ENCODE measurements at regions of chr6 and their contacts with region 1.

Region 1: DNA sequence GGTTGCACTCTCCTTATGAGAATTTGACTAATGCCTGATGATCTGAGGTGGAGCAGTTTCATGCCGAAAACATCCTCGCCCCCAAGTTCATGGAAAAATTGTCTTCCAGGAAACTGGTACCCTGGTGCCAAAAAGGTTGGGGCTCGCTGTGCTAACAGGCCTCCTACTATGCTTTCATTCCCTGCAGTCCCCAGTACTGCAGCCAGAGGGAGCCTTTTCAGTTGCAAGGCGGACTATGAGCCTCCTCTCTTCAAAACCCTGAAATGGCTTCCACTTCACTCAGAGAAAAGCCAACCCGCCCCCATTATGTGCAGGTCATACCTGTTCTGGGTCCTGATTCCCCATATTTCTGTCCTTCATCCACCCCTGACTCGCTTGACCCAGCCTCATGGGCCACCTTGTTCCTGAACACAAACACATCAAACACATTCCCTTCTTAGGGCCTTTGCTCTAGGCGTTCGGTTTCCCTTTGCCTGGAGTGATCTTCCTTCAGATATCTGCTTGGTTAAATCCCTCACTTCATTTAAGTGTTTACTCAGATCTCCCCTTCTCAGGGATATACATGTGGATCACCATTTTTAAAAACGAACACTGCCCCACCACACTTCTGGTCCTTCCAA is 173.7 kb downstream of the PHACTR1 start:
- DNase-seq: no peak
- H3K4me3 ChIP-seq: no peak overlapping the region
- H3K27ac ChIP-seq: no peak overlapping the region
- H3K27me3 ChIP-seq: peaks cover 0 to 12% (median 0%) of the 10 kb centered on the region in 45 donors
- CTCF ChIP-seq: peak in 33 of 56 donors; percentile 11 to 44 (median 19)

Region 2: DNA sequence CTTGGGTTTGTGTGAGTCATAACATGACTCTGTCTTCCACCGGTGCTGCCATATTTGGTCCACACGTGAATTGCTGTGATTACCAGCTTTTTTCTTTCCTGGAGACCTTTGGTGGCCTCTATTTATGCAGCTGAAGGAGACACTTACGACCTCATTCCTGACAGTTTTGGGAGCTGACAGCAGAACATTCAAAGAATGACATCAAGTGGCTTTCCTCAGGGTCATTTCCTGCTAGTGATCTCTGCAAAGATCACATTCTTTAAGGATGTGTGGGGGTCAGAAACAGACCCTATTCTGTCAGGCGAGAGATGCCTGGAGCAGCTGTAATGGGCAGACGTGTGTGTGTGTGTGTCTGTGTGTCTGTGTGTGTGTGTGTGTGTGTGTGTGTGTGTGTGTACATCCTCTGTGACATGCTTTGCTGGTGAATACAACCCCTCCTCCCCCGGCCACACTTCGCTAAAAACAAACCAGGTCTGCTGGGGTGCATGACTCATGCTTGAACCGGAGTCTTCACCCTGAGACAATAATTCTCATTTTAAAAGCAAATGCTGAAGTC is 1237.2 kb before region 1 on chr6:
- intact Hi-C with region 1: loop called in 1 of 2 experiments (anchors 10 kb)
- DNase-seq: peak in 1 of 10 donors; percentile 11
- H3K4me3 ChIP-seq: no peak overlapping the region
- H3K27ac ChIP-seq: peak overlapping the region in 3 of 59 donors; percentile 7 to 31 (median 20)
- H3K27me3 ChIP-seq: no peaks in the 10 kb centered on the region
- CTCF ChIP-seq: no peak

Region 3: GRCh38 chr6:12637960-12638641 is 252.2 kb before region 1 on chr6:
- intact Hi-C with region 1: loop called (anchors 5 to 10 kb)
- DNase-seq: peak in 9 of 10 donors; percentile 31 to 61 (median 57)
- H3K4me3 ChIP-seq: no peak overlapping the region
- H3K27ac ChIP-seq: no peak overlapping the region
- H3K27me3 ChIP-seq: no peaks in the 10 kb centered on the region
- CTCF ChIP-seq: peak; percentile 38 to 81 (median 64)

Region 4: GRCh38 chr6:12923644-12924235 is 33.5 kb after region 1 on chr6:
- intact Hi-C with region 1: no loop called
- DNase-seq: no peak
- H3K4me3 ChIP-seq: no peak overlapping the region
- H3K27ac ChIP-seq: no peak overlapping the region
- H3K27me3 ChIP-seq: no peaks in the 10 kb centered on the region
- CTCF ChIP-seq: no peak